Right ventricle myocardium superior (tissue), 1 donor: ENCODE measurements at regions of chr11 and their contacts with region 1.

Region 1: DNA sequence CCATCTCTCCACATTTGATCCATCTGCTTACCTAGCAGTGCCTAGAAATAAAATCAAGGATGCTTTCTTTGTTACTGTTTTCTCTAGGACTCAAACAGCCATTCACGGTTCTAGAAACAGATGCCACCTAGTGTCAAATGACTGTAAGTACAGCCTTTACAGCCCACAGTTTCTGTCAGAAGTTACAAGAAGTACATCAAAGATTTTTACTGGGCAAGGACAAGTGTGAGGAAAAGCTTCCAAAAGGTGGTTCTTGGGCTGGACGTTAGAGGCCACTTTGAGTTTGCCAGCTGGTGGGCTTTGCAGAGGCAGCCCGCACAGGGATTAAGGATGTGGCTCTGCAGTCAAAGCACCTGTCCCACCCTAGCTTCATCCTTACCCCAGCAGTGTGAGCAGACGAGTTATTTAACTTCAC is 6.9 kb downstream of the KMT5B start:
- DNase-seq: no peak
- ATAC-seq: peak; percentile 66

Region 2: DNA sequence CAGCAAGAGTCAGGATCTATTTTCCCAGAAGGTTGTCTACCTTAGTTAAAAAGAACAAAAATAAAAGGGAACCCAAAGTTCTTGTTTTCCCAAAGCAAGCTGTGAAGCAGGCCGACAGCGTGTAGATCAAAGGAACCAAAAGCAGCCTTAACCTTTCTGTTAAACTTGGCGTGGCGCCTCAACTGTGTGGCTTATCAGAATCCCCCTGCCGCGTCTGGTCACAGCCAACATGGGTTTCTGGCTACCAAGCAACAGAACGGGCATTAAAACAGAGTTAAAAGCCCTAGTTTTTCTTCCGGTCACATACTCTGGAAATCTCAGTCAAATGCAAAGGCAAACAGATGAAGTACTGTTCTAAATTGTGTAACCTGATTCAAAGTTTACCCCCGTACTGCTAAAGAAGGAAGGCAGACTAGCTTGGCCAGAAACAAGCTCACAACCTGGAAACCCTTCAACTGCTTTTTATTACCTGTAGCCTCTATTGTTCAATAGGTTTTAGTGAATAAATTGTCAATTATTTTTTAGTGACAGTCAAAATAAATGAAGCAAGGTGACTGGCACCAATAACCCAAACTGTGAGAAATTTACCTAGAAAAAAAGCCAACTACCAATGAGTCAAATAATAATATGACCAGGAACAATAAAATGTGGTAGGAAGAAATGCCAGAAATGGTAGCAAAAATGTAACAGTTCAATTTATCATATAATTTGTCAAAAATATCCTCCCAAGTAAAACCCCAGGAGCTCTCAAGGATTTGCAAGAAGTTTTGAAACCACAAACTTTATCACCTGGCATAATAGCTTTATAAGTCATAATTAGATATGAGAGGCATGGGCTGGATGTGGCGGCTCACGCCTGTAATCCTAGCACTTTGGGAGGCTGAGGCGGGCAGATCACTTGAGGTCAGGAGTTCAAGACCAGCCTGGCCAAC is 106.5 kb before region 1 on chr11:
- intact Hi-C with region 1: loop called (anchors 10 kb)
- DNase-seq: no peak
- ATAC-seq: peak; percentile 63

Region 3: DNA sequence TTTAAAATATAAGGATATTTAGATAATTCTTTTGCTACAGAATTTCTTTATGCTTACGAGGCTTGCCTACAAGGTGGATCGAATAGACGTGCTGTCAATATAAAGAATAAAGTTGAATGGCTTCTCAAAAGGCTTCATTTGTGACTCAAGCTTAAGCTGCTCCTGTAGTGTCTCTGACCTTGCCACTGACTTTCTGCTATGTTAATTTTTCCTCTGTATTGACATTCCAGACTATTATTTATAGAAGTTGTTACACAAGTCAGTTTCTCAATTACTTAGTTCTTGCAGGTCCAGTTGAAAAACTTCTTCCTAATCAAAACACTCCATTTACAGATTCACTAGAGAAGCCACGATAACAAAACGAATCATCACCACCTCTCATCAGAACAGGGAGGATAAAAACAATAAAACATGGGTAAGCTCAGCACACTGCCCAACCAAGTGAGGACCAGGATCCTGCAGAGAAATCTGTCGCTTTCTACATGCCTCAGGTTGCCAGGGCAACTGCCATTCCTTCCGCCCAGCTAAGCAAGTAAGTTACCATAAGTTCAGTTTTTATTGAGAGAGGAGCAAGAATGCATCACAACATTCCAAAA is 46.0 kb before region 1 on chr11:
- intact Hi-C with region 1: no loop called
- DNase-seq: no peak
- ATAC-seq: peak; percentile 50